ENCODE measurements at regions of chrX and their contacts with region 1.

Region 1: DNA sequence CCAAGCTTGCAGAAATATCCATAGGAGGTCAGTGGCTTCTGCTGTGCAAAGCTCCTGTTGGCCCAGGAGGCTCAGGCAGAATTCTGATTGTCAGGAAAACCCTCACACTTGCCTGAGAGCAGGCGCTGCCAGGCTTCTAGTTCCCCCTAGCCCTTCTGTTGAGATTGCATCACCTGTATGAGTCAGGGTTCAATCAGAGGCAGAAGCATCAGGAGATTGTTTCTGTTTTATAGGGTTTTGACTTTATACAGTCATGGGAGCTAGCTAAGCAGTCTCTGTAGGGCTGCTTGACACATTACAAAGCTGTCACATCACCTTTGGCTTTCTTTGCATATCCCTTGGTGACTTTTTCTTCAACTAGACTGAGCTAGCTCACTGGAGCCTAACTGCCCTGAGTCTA is 27.8 kb downstream of the DIPK2B start:
- DNase-seq: peak; percentile 82
- H3K4me3 Mint-ChIP-seq: no peak overlapping the region
- H3K27ac Mint-ChIP-seq: no peak overlapping the region
- H3K4me1 Mint-ChIP-seq: peaks cover 7% of the 10 kb centered on the region
- H3K27me3 Mint-ChIP-seq: peaks cover 51% of the 10 kb centered on the region
- CTCF ChIP-seq: no peak

Region 2: DNA sequence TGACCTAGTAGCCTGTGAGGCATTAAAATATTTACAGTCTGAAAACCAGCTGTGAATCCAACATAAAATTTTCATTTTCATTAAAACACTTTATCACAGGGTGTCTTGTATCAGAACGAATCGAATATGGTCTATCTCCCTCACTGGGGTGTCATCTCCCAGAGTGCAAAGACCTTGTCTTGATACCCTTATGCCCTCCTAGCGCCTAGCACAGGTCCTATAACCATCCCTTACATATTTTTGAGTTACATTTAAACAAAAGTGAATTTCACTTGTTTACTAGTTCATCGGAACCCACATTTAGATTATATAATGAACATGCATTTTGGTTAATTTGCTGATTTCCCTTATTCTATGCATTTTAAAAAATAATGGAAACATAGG is 13.7 kb after region 1 on chrX:
- CTCF ChIA-PET with region 1: interaction called, 13 read pairs
- POLR2A ChIA-PET with region 1: no interaction called
- intact Hi-C with region 1: no loop called
- DNase-seq: no peak
- H3K4me3 Mint-ChIP-seq: peak overlapping the region; percentile 72
- H3K27ac Mint-ChIP-seq: no peak overlapping the region
- H3K4me1 Mint-ChIP-seq: peaks cover 6% of the 10 kb centered on the region
- H3K27me3 Mint-ChIP-seq: peaks cover 65% of the 10 kb centered on the region
- CTCF ChIP-seq: no peak

Region 3: GRCh38 chrX:45232139-45232538 is 59.2 kb after region 1 on chrX:
- CTCF ChIA-PET with region 1: no interaction called
- POLR2A ChIA-PET with region 1: no interaction called
- intact Hi-C with region 1: no loop called
- DNase-seq: no peak
- H3K4me3 Mint-ChIP-seq: no peak overlapping the region
- H3K27ac Mint-ChIP-seq: no peak overlapping the region
- H3K4me1 Mint-ChIP-seq: no peaks in the 10 kb centered on the region
- H3K27me3 Mint-ChIP-seq: peaks cover 61% of the 10 kb centered on the region
- CTCF ChIP-seq: no peak

Measured in MCF 10A (cell line).